Caco-2 (cell line): ENCODE measurements at regions of chr17 and their contacts with region 1.

Region 1: GRCh38 chr17:61495145-61495857 is 43.1 kb downstream of the TBX4 start:
- DNase-seq: no peak
- H3K4me3 ChIP-seq: no peak overlapping the region
- H3K4me3 Mint-ChIP-seq: peak overlapping the region; percentile 38
- H3K27ac Mint-ChIP-seq: peak overlapping the region; percentile 42
- H3K4me1 ChIP-seq: peaks cover 42% of the 10 kb centered on the region
- H3K4me1 Mint-ChIP-seq: peaks cover 26% of the 10 kb centered on the region
- H3K27me3 ChIP-seq: no peaks in the 10 kb centered on the region
- H3K27me3 Mint-ChIP-seq: no peaks in the 10 kb centered on the region
- CTCF ChIP-seq: no peak

Region 2: GRCh38 chr17:60798576-60798975 is 696.7 kb before region 1 on chr17:
- CTCF ChIA-PET with region 1: no interaction called
- POLR2A ChIA-PET with region 1: no interaction called
- intact Hi-C with region 1: no loop called
- DNase-seq: no peak
- H3K4me3 ChIP-seq: no peak overlapping the region
- H3K4me3 Mint-ChIP-seq: no peak overlapping the region
- H3K27ac Mint-ChIP-seq: no peak overlapping the region
- H3K4me1 ChIP-seq: 0 out of 2 replicates have a peak, but pooled peaks cover 4% of the 10 kb centered on the region
- H3K4me1 Mint-ChIP-seq: no peaks in the 10 kb centered on the region
- H3K27me3 ChIP-seq: no peaks in the 10 kb centered on the region
- H3K27me3 Mint-ChIP-seq: peaks cover 5% of the 10 kb centered on the region
- CTCF ChIP-seq: no peak

Region 3: GRCh38 chr17:61511480-61512182 is 16.3 kb after region 1 on chr17:
- CTCF ChIA-PET with region 1: no interaction called
- POLR2A ChIA-PET with region 1: no interaction called
- intact Hi-C with region 1: loop called (anchors 2 kb)
- DNase-seq: peak in 1 of 2 experiments; percentile 29
- H3K4me3 ChIP-seq: no peak overlapping the region
- H3K4me3 Mint-ChIP-seq: no peak overlapping the region
- H3K27ac Mint-ChIP-seq: no peak overlapping the region
- H3K4me1 ChIP-seq: no peaks in the 10 kb centered on the region
- H3K4me1 Mint-ChIP-seq: no peaks in the 10 kb centered on the region
- H3K27me3 ChIP-seq: no peaks in the 10 kb centered on the region
- H3K27me3 Mint-ChIP-seq: no peaks in the 10 kb centered on the region
- CTCF ChIP-seq: peak in 1 of 2 experiments; percentile 17

Region 4: DNA sequence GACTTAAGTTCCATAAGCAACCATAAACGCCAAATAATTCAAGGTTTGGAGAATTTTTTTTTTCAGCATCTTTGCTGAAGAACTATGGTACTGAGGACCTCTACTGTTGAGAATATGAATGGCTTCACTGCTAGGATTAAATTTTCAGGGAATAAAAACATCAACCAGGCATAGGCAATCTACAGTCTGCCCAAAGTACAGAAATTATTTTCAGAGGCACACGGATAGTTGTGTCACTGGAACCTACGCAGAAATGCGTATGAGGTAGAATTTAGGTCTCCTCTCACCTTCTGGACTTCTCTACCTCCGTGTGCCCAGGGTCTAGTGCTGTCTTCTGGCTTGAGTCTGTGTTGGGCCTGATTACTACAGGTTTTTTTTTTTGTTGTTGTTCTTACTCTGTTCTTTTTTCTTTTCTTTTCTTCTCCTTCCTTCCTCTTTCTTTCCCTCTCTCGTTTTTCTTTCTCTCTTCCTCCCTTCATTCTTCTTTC is 56.0 kb after region 1 on chr17:
- CTCF ChIA-PET with region 1: no interaction called
- POLR2A ChIA-PET with region 1: no interaction called
- intact Hi-C with region 1: loop called (anchors 2 kb)
- DNase-seq: peak in 1 of 2 experiments; percentile 52
- H3K4me3 ChIP-seq: no peak overlapping the region
- H3K4me3 Mint-ChIP-seq: no peak overlapping the region
- H3K27ac Mint-ChIP-seq: no peak overlapping the region
- H3K4me1 ChIP-seq: no peaks in the 10 kb centered on the region
- H3K4me1 Mint-ChIP-seq: no peaks in the 10 kb centered on the region
- H3K27me3 ChIP-seq: no peaks in the 10 kb centered on the region
- H3K27me3 Mint-ChIP-seq: peaks cover 6% of the 10 kb centered on the region
- CTCF ChIP-seq: peak; percentile 68 to 74